ENCODE measurements at regions of chr3 and their contacts with region 1.

Region 1: GRCh38 chr3:15629860-15630597 is 28.5 kb downstream of the BTD start:
- DNase-seq: no peak
- ATAC-seq: peak; percentile 95

Region 2: DNA sequence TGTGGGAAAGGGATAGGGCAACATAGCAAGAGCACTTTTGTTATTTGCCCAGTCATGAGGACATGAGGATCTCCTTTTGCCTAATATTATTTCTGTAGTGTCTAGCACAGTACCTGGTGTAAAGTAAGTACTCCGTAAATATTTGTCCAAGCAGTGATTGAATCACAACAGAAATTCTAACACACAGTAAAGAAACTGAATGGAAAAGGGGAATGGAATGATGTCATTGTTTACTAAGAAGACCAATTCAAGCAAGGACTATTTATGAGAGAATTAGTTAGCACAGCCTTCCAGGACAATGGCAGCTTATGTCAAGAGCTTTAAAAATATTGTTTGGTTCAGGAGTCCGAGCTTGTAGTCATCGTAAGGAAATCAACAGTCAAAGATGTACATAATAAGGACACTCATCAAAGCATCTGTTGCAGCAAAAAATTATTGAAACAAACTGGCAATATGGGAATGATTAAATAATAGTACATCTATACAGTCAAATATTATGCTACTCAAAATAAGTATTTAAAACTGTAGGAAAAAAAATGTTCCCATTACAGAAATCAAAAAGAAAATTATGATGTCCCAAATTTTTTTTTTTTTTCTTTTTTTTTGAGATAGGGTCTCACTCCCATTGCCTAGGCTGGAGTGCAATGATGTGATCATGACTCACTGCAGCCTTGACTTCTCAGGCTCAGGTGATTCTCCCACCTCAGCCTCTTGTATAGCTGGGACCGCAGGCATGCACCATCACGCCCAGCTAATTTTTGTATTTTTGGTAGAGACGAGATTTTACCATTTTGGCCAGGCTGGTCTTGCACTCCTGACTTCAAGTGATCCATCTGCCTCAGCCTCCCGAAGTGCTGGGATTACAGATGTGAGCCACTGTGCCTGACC is 406.1 kb before region 1 on chr3:
- intact Hi-C with region 1: no loop called
- DNase-seq: no peak
- ATAC-seq: no peak

Region 3: DNA sequence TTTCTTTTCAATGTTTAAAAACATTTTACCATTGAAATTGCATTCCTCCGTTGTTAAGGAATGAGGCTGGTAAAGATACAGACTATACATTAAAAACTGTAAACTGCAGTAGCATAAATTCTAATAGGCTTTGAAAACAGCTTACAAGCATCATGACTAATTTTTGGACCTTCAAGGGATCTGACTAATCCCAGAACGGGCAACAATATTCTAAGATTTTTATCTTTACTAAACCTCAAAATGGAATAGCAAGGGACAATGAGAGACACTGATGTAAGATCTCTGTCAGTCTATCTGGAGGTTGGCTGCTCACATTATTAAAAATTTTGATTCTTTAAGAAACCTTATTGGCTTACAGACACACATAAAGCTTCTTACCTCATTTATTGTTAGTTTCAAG is 46.2 kb after region 1 on chr3:
- intact Hi-C with region 1: loop called (anchors 5 kb)
- DNase-seq: no peak
- ATAC-seq: no peak

Region 4: DNA sequence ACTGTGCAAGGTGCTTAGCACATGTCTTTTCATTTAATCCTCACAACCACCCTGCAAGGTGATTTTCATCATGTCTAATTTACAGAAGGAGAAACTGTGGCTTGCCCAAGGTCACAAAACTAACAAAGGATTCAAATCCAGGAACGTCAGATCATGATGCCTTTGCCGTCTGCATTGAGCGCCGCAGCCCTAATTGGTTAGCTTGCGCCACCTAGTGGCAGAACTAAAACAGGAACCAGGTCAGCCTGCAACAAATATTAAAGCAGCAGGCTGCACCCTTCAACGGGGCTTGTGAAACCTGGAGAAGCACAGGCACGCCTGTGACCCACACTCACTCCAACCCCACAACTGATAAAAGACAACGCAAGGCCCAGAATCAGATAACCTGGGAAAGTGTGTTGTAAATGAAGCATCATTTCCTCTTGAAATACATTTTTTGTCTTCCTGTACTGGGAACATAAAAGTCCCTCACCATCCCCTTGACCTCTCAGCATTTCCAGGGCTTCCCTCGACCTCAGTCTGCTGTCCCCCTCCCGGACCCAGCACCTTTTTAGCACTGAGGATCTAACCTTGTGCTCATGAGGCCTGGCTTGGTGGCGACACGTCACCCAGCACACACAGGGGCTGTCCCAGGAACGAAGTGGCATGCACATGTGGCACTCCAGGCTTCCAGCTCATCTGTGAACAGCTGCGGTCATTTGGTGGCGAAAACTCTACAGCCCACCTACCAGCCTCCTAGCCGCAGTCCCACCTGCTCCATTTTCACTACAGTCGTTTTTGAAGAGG is 617.4 kb after region 1 on chr3:
- intact Hi-C with region 1: loop called (anchors 10 kb)
- DNase-seq: peak; percentile 83
- ATAC-seq: peak; percentile 60

Measured in Right ventricle myocardium inferior (tissue), 1 donor.